GM12878 (cell line): ENCODE measurements at regions of chr20 and their contacts with region 1.

Region 1: DNA sequence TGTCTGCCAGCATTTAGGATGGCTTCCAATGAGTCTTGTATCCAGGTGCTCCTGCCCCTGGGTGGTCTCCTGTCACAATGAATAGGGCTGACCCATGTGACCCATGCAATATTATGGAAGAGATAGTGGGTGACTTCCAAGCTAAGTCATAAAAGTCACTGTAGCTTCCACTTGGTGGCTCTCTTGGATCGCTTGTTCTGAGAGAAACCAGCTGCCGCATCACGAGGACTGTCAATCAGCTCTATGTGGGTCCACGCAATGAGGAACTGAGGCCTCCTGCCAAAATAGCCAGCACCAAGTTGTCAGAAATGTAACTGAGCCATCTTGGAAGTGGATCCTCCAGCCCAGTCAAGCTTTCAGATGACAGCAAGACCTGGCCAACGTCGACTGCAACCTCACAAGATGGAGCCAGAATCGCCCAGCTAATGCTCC is 14.9 kb upstream of the MATN4 start:
- DNase-seq: no peak
- ATAC-seq: peak; percentile 66
- H3K4me3 ChIP-seq: no peak overlapping the region
- H3K27ac ChIP-seq: no peak overlapping the region
- H3K4me1 ChIP-seq: peaks cover 19% of the 10 kb centered on the region
- H3K27me3 ChIP-seq: no peaks in the 10 kb centered on the region; a peak in 1 of 4 replicates
- CTCF ChIP-seq: peak; percentile 12 to 56 (median 29); a peak in 3 of 6 replicates
- EP300 ChIP-seq: no peak
- POLR2A ChIP-seq: no peak
- RAD21 ChIP-seq: peak; percentile 45; the same call in 1 of the 2 replicates

Region 2: GRCh38 chr20:44810391-44811149 is 512.4 kb before region 1 on chr20 and contains the start of gene RIMS4:
- CTCF ChIA-PET with region 1: no interaction called
- POLR2A ChIA-PET with region 1: no interaction called
- RAD21 ChIA-PET with region 1: no interaction called
- SMC1A ChIA-PET with region 1: no interaction called
- in situ Hi-C with region 1: no loop called
- intact Hi-C with region 1: no loop called
- DNase-seq: no peak
- ATAC-seq: no peak
- H3K4me3 ChIP-seq: no peak within 1 kb of the TSS
- H3K27ac ChIP-seq: no peak within 1 kb of the TSS
- H3K4me1 ChIP-seq: no peaks in the 10 kb centered on the region
- H3K27me3 ChIP-seq: peaks cover 10 to 13% of the 10 kb centered on the region in 2 experiments
- CTCF ChIP-seq: no peak
- EP300 ChIP-seq: no peak
- POLR2A ChIP-seq: no peak
- RAD21 ChIP-seq: no peak
- polyA plus RNA-seq, gene RIMS4: not detected

Region 3: DNA sequence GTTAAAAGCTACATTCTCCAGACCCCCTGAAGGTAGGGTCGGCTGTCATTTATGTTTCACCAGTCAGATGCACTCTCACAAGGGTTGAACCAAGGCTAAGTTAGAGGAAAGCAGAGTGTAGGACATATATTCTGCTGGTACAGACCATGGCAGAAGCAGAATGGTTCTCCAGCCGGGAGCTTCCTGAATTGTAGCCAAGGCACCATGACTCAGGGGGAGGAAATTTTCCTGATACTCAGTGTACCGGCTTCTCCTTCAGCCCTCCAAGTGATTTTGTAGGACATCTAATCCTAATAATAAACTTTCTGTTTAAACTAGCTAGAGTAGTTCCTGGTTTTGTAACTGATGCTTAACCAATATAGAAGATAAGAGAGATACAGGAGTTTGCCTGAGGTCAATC is 54.4 kb before region 1 on chr20:
- CTCF ChIA-PET with region 1: no interaction called
- POLR2A ChIA-PET with region 1: no interaction called
- RAD21 ChIA-PET with region 1: no interaction called
- SMC1A ChIA-PET with region 1: no interaction called
- in situ Hi-C with region 1: no loop called
- intact Hi-C with region 1: no loop called
- DNase-seq: no peak
- ATAC-seq: no peak
- H3K4me3 ChIP-seq: no peak overlapping the region
- H3K27ac ChIP-seq: no peak overlapping the region
- H3K4me1 ChIP-seq: no peaks in the 10 kb centered on the region
- H3K27me3 ChIP-seq: peaks cover 3% of the 10 kb centered on the region in 2 experiments; a peak in 2 of 4 replicates
- CTCF ChIP-seq: no peak
- EP300 ChIP-seq: no peak
- POLR2A ChIP-seq: no peak
- RAD21 ChIP-seq: no peak

Region 4: DNA sequence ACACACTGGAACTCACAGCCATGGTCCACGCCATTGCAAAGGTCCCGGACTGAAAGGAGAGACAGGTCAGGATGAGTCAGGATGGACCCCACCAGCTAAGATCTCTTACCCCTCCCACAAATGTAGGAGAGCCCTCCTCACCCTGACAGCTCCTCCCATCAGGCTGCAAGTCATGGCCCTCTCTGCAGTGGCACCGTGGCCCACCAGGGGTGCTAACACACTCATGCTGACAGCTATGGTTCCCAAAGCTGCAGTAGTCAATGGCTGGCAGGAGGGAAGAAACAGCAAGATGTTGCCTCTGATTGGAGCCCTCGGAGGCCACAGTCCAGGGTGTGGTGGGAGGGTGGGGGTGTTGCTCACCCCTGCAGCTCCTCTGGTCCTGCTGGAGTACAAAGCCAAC is 22.0 kb before region 1 on chr20:
- CTCF ChIA-PET with region 1: interaction called, 28 read pairs
- POLR2A ChIA-PET with region 1: no interaction called
- RAD21 ChIA-PET with region 1: interaction called, 4 read pairs
- SMC1A ChIA-PET with region 1: no interaction called
- in situ Hi-C with region 1: no loop called
- intact Hi-C with region 1: no loop called
- DNase-seq: no peak
- ATAC-seq: peak; percentile 98
- H3K4me3 ChIP-seq: no peak overlapping the region
- H3K27ac ChIP-seq: no peak overlapping the region
- H3K4me1 ChIP-seq: peaks cover 6% of the 10 kb centered on the region; the same call in 1 of the 2 replicates
- H3K27me3 ChIP-seq: no peaks in the 10 kb centered on the region
- CTCF ChIP-seq: peak; percentile 40 to 66 (median 61)
- EP300 ChIP-seq: no peak
- POLR2A ChIP-seq: no peak
- RAD21 ChIP-seq: no peak

Region 5: GRCh38 chr20:45362804-45363610 is 40.0 kb after region 1 on chr20 and contains the start of gene SYS1:
- CTCF ChIA-PET with region 1: interaction called, 97 read pairs
- POLR2A ChIA-PET with region 1: no interaction called
- RAD21 ChIA-PET with region 1: interaction called, 30 read pairs
- SMC1A ChIA-PET with region 1: interaction called, 23 read pairs
- in situ Hi-C with region 1: no loop called
- intact Hi-C with region 1: loop called (anchors 2 kb)
- DNase-seq: peak; percentile 94
- ATAC-seq: peak; percentile 85
- H3K4me3 ChIP-seq: peak within 1 kb of the TSS; percentile 62
- H3K27ac ChIP-seq: peak within 1 kb of the TSS; percentile 92
- H3K4me1 ChIP-seq: peaks cover 39% of the 10 kb centered on the region
- H3K27me3 ChIP-seq: no peaks in the 10 kb centered on the region
- CTCF ChIP-seq: peak; percentile 85 to 99 (median 87); a peak in 5 of 6 replicates
- EP300 ChIP-seq: 0 out of 4 replicates have a peak, but pooled peaks of 1 of the 2 experiments have one; percentile 30
- POLR2A ChIP-seq: peak; percentile 94
- RAD21 ChIP-seq: peak; percentile 91
- polyA plus RNA-seq, gene SYS1: 5.1 to 7.3 TPM

Region 6: DNA sequence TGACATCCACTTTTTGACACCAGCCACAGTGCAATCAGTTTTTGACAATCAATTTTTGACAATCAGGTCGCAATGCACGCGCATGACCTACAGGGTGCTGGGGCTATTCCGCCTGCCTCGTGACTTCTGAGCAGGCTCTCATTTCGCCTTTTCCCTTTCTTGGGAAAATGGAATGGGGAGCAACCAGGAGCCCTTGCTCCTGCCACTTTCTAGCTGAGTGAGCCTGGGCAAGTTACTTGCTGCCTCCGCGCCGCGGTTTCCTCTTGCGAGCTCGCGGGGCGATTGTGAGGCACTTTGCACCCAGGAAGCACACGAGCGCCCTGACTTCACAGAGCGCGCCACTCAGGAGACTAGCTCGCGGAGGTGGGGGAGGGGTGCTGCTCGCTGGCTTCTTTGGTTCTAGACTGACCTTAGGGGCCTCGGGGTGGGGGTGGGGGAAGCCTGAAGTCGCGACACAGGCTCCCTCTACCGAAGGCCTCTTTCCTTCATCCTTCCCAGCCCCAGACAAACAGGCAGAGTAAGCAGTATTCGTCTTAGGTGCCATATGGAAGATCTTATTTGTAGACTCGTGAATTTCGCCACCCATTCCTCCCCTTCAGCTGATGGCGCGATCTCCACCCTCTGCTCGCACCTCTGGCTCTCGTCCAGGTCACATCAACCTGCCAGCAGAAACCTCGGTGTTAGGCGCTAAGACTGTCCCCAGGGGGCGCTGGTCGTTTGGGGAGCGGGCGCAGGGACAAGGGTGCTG is 50.6 kb after region 1 on chr20:
- CTCF ChIA-PET with region 1: interaction called, 53 read pairs
- POLR2A ChIA-PET with region 1: interaction called, 4 read pairs
- RAD21 ChIA-PET with region 1: interaction called, 30 read pairs
- SMC1A ChIA-PET with region 1: interaction called, 7 read pairs
- in situ Hi-C with region 1: no loop called
- intact Hi-C with region 1: loop called (anchors 2 kb)
- DNase-seq: no peak
- ATAC-seq: peak; percentile 98
- H3K4me3 ChIP-seq: peak overlapping the region; percentile 59; the same call in 1 of the 2 replicates
- H3K27ac ChIP-seq: no peak overlapping the region
- H3K4me1 ChIP-seq: peaks cover 15% of the 10 kb centered on the region
- H3K27me3 ChIP-seq: no peaks in the 10 kb centered on the region
- CTCF ChIP-seq: peak; percentile 82 to 90 (median 89)
- EP300 ChIP-seq: no peak
- POLR2A ChIP-seq: no peak
- RAD21 ChIP-seq: peak; percentile 88

Region 7: GRCh38 chr20:45456632-45457031 is 133.7 kb after region 1 on chr20:
- CTCF ChIA-PET with region 1: interaction called, 38 read pairs
- POLR2A ChIA-PET with region 1: no interaction called
- RAD21 ChIA-PET with region 1: interaction called, 10 read pairs
- SMC1A ChIA-PET with region 1: interaction called, 7 read pairs
- in situ Hi-C with region 1: no loop called
- intact Hi-C with region 1: loop called (anchors 5 kb)
- DNase-seq: no peak
- ATAC-seq: peak; percentile 86
- H3K4me3 ChIP-seq: no peak overlapping the region
- H3K27ac ChIP-seq: no peak overlapping the region
- H3K4me1 ChIP-seq: no peaks in the 10 kb centered on the region
- H3K27me3 ChIP-seq: peaks cover 0 to 3% of the 10 kb centered on the region in 2 experiments; a peak in 1 of 4 replicates
- CTCF ChIP-seq: peak; percentile 35 to 47 (median 46); a peak in 4 of 6 replicates
- EP300 ChIP-seq: no peak
- POLR2A ChIP-seq: no peak
- RAD21 ChIP-seq: peak; percentile 27